SK-N-SH (cell line): ENCODE measurements at regions of chr17 and their contacts with region 1.

Region 1: GRCh38 chr17:81101614-81102306 is 63.5 kb upstream of the PVALEF start:
- DNase-seq: peak; percentile 100
- H3K4me3 ChIP-seq: peak overlapping the region in 1 of 2 experiments; percentile 24; a peak in 1 of 4 replicates
- H3K27ac ChIP-seq: no peak overlapping the region
- H3K4me1 ChIP-seq: peaks cover 11 to 13% of the 10 kb centered on the region in 2 experiments; a peak in 3 of 4 replicates
- H3K27me3 ChIP-seq: no peaks in the 10 kb centered on the region
- CTCF ChIP-seq: peak; percentile 100
- EP300 ChIP-seq: no peak
- RAD21 ChIP-seq: peak; percentile 97

Region 2: GRCh38 chr17:80991645-80992076 is 110.1 kb before region 1 on chr17 and contains the start of gene CHMP6:
- CTCF ChIA-PET with region 1: interaction called, 84 read pairs
- POLR2A ChIA-PET with region 1: no interaction called
- DNase-seq: peak; percentile 99
- H3K4me3 ChIP-seq: peak within 1 kb of the TSS; percentile 79 to 89
- H3K27ac ChIP-seq: no peak within 1 kb of the TSS; a peak in 1 of 4 replicates
- H3K4me1 ChIP-seq: peaks cover 10 to 17% of the 10 kb centered on the region in 2 experiments; a peak in 1 of 4 replicates
- H3K27me3 ChIP-seq: no peaks in the 10 kb centered on the region
- CTCF ChIP-seq: peak; percentile 32
- EP300 ChIP-seq: no peak; a peak in 1 of 4 replicates
- RAD21 ChIP-seq: no peak
- polyA plus RNA-seq, gene CHMP6: 44.1 and 44.3 TPM in 2 replicates

Region 3: GRCh38 chr17:81018044-81018802 is 83.5 kb before region 1 on chr17:
- CTCF ChIA-PET with region 1: interaction called, 668 read pairs
- POLR2A ChIA-PET with region 1: no interaction called
- DNase-seq: no peak
- H3K4me3 ChIP-seq: no peak overlapping the region
- H3K27ac ChIP-seq: no peak overlapping the region
- H3K4me1 ChIP-seq: peaks cover 0 to 11% of the 10 kb centered on the region in 2 experiments; a peak in 1 of 4 replicates
- H3K27me3 ChIP-seq: peaks cover 10% of the 10 kb centered on the region
- CTCF ChIP-seq: no peak
- EP300 ChIP-seq: no peak
- RAD21 ChIP-seq: no peak

Region 4: GRCh38 chr17:81049973-81050551 is 51.7 kb before region 1 on chr17:
- CTCF ChIA-PET with region 1: interaction called, 32 read pairs
- POLR2A ChIA-PET with region 1: no interaction called
- DNase-seq: peak; percentile 50
- H3K4me3 ChIP-seq: no peak overlapping the region
- H3K27ac ChIP-seq: no peak overlapping the region
- H3K4me1 ChIP-seq: peaks cover 9 to 48% of the 10 kb centered on the region in 2 experiments; a peak in 3 of 4 replicates
- H3K27me3 ChIP-seq: no peaks in the 10 kb centered on the region
- CTCF ChIP-seq: no peak
- EP300 ChIP-seq: no peak
- RAD21 ChIP-seq: no peak

Region 5: GRCh38 chr17:81071761-81072741 is 29.7 kb before region 1 on chr17:
- CTCF ChIA-PET with region 1: interaction called, 63 read pairs
- POLR2A ChIA-PET with region 1: interaction called, 3 read pairs
- DNase-seq: no peak
- H3K4me3 ChIP-seq: no peak overlapping the region
- H3K27ac ChIP-seq: no peak overlapping the region
- H3K4me1 ChIP-seq: peaks cover 0 to 48% of the 10 kb centered on the region in 2 experiments; a peak in 1 of 4 replicates
- H3K27me3 ChIP-seq: no peaks in the 10 kb centered on the region
- CTCF ChIP-seq: no peak
- EP300 ChIP-seq: no peak
- RAD21 ChIP-seq: no peak

Region 6: DNA sequence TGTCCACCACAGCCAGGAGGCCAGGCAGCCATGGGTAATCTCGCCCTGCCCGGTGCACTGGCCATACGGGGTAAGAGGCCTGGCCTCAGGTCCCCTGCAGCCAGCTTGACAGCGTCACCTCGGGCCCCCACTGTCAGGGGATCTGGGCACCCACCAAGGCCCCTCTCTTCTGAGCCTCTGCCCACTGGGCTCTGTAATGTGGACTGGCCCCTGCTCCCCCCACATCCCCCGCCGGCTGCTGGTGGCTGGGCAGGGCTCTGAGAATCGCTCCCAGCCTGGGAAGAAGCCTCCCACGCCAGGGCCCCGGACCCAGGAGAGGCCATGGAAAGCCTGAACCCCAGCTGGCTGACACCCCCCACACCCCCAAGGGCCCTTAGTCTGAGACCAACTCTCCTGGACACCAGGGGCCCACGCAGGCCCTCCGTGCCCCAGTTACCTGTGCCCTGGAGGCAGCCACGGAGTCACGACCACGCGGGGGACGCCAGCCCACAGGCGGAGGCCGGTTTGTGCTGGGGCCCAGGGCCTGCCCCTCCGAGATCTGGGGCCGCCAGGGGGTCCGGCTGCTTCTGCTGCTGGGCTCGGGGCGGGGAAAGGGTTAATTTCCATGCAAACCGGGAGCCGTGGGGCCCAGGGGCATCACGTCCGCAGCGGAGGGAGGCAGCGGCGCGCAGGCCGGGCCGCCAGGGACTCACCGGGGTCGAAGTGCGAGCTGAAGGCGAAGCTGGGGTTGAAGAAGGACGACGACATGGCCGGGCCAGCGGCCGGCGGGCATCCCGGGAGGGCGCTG is 63.7 kb after region 1 on chr17 and contains the start of gene PVALEF:
- CTCF ChIA-PET with region 1: interaction called, 10 read pairs
- POLR2A ChIA-PET with region 1: no interaction called
- DNase-seq: no peak
- H3K4me3 ChIP-seq: peak within 1 kb of the TSS; percentile 46 to 53
- H3K27ac ChIP-seq: peak within 1 kb of the TSS in 1 of 2 experiments; percentile 85; a peak in 2 of 4 replicates
- H3K4me1 ChIP-seq: peaks cover 0 to 26% of the 10 kb centered on the region in 2 experiments; a peak in 1 of 4 replicates
- H3K27me3 ChIP-seq: peaks cover 22% of the 10 kb centered on the region; the same call in 1 of the 2 replicates
- CTCF ChIP-seq: no peak
- EP300 ChIP-seq: no peak
- RAD21 ChIP-seq: no peak
- polyA plus RNA-seq, gene PVALEF: not detected in 2 replicates